ENCODE measurements at regions of chr1 and their contacts with region 1.

Region 1: GRCh38 chr1:150604226-150604588 is 24.8 kb upstream of the MCL1 start:
- DNase-seq: no peak
- H3K4me3 ChIP-seq: no peak overlapping the region
- H3K27ac ChIP-seq: peak overlapping the region; percentile 86
- H3K4me1 ChIP-seq: peaks cover 16% of the 10 kb centered on the region
- H3K27me3 ChIP-seq: no peaks in the 10 kb centered on the region
- CTCF ChIP-seq: no peak

Region 2: GRCh38 chr1:150912623-150913022 is 308.4 kb after region 1 on chr1:
- CTCF ChIA-PET with region 1: no interaction called
- POLR2A ChIA-PET with region 1: interaction called, 10 read pairs
- intact Hi-C with region 1: no loop called
- DNase-seq: no peak
- H3K4me3 ChIP-seq: no peak overlapping the region
- H3K27ac ChIP-seq: no peak overlapping the region
- H3K4me1 ChIP-seq: no peaks in the 10 kb centered on the region
- H3K27me3 ChIP-seq: no peaks in the 10 kb centered on the region
- CTCF ChIP-seq: no peak